ENCODE measurements at regions of chr11 and their contacts with region 1.

Region 1: DNA sequence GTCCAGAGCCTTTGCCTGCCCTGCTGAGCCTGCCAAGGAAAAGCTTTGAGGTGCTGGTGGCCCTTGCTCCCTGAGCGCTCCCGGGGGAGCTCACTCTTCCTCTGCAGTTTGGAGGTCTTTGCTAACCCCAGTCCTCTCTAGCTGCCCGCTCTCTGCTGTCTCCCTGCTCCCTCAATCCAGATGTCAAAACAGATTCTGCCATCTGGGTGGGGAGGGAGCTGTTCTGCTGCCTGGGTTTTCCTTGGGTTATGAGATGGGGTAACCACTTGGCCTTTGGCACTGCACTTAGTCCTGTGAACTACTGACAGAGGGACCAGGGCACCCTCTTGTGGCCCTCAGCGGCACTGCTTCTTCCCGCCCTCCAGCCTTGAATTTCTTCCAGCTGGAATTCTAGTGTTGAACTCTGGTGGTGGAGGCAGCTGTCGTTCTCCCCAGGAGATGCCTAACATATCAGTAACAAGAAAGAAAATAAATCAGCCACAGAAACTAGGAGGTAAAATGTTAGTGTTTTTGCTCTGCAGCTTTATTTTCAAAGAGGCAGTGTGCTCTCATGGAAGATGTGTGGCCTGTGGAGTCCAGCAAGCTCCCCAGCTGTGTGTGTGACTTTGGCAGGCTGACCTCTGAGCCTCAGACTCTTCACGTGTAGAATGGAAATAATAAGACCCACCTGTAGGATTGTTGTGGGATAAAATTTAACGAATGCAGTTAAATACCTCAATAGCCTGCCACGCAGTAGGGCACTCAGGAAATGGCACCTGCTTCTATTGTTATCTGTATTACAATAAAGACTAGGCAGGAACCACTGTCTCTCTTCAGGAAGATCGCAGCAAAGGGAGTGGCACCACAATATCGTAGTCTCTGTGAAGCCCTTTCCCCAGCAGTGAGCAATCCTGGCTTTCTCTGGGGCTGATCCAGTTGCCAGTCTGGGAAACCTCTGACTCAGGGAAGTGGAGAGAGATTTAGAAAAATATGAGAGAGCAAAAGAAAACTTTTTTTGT is 23.4 kb downstream of the ARFGAP2 start:
- DNase-seq: peak; percentile 75 to 92 (median 90)
- ATAC-seq: peak; percentile 74
- H3K4me3 ChIP-seq: no peak overlapping the region
- H3K27ac ChIP-seq: no peak overlapping the region
- H3K4me1 ChIP-seq: peaks cover 5% of the 10 kb centered on the region
- H3K27me3 ChIP-seq: no peaks in the 10 kb centered on the region

Region 2: GRCh38 chr11:46889689-46890475 is 263.4 kb before region 1 on chr11:
- intact Hi-C with region 1: loop called in 3 of 4 experiments (anchors 2 kb)
- DNase-seq: peak in 2 of 3 donors; percentile 47 to 71
- ATAC-seq: peak; percentile 75 to 77
- H3K4me3 ChIP-seq: no peak overlapping the region
- H3K27ac ChIP-seq: no peak overlapping the region
- H3K4me1 ChIP-seq: no peaks in the 10 kb centered on the region
- H3K27me3 ChIP-seq: no peaks in the 10 kb centered on the region